Activated T-helper 1 cell treated with anti-CD3 and anti-CD28 coated beads, Interleukin-12 subunit alpha, Interleukin-12 subunit beta, Interleukin-2, Interleukin-4 antibody, amounts not matched to agents 30 ng/mL and 10 ng/mL and 1 ng/mL, durations not matched to agents 14 hours and 24 hours and 36 hours (primary cell): ENCODE measurements at regions of chr10 and their contacts with region 1.

Region 1: DNA sequence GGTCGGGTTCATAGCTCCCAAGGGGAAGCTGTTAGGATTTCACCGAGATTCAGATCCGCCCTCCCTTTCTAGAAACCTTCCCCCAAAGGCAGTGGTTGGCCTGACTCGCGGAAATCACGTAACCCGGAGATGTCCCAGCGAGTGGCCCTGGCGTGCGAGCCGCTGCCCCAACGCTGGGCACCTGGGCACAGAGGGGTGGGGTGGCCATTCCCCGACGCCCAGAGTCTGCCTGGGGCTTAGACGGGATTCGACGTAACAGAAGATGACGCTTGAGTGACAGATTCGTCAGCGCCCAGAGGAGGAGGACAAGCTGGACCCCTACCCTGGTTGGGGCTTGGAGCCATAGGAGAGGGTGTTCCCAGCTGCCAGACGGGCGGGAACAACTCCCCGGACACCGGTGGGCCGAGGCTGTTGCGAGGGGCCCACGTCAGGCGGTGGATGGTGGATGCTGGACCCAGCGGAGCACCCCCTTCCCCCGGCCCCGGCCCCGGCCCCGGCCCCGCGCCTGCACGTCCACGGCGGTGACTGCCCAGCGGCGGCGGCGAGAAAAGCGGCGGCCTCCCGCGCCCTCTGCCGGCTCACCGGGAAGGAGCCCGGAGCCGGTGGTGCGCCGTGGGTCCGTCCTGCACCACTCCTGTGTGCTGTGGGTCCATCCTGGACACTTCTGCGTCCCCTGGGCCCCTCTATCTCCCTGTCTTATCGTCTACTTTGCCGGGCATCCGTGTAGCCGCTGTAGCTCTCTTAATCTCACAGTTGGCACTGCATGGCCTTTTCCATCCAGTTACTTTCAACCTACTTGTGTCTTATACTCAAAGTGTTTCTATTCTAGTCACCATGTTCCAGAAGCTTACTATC is 35.4 kb upstream of the KNDC1 start:
- DNase-seq: no peak
- H3K4me3 Mint-ChIP-seq: no peak overlapping the region
- H3K27ac Mint-ChIP-seq: no peak overlapping the region
- H3K4me1 Mint-ChIP-seq: no peaks in the 10 kb centered on the region
- H3K27me3 Mint-ChIP-seq: peaks cover 6% of the 10 kb centered on the region

Region 2: GRCh38 chr10:132836832-132837540 is 287.6 kb before region 1 on chr10:
- intact Hi-C with region 1: loop called (anchors 10 kb)
- DNase-seq: peak; percentile 14
- H3K4me3 Mint-ChIP-seq: no peak overlapping the region
- H3K27ac Mint-ChIP-seq: no peak overlapping the region
- H3K4me1 Mint-ChIP-seq: no peaks in the 10 kb centered on the region
- H3K27me3 Mint-ChIP-seq: no peaks in the 10 kb centered on the region

Region 3: DNA sequence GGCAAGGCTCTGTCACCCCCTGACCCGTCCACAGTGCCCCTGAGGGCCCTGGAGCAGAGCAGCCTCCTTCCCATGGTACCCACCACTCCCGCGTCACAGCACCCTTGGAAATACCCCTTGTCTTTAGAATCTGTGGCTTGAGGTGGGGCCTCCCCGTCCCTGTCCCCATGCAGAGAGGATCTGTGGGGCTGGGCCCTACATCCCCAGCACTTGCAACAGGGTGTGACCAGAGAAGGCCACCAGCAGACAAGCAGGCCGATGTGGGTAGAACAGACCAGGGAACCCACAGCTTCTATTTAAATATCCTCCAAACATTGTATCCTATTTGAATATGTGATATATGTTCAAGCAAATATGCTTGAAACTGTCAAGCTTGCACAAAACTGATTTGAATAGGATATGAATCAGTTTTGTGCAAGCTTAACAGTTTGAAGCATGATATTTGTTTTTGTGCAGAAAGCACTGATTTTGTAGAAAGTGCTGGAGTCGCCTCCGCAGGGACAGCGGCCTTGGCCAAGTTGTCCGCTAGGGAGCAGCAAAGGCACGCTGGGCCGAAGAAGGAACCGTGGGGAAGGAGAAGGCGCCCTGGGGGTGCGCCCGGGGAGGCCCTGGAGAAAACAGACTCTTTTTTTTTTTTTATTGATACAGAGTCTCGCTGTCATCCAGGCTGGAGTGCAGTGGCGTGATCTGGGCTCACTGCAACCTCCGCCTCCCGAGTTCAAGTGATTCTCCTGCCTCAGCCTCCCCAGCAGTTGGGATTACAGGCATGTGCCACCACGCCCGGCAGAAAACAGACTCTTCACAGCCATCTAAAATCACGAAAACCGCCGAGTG is 184.4 kb before region 1 on chr10:
- intact Hi-C with region 1: loop called (anchors 2 kb)
- DNase-seq: no peak
- H3K4me3 Mint-ChIP-seq: no peak overlapping the region
- H3K27ac Mint-ChIP-seq: peak overlapping the region; percentile 40
- H3K4me1 Mint-ChIP-seq: no peaks in the 10 kb centered on the region
- H3K27me3 Mint-ChIP-seq: peaks cover 29% of the 10 kb centered on the region